Endothelial cell of umbilical vein (primary cell): ENCODE measurements at regions of chr7 and their contacts with region 1.

Region 1: GRCh38 chr7:108294595-108294994 is 161.6 kb downstream of the NRCAM start:
- DNase-seq: peak; percentile 81
- H3K4me3 ChIP-seq: no peak overlapping the region
- H3K27ac ChIP-seq: peak overlapping the region; percentile 88
- H3K4me1 ChIP-seq: peaks cover 70% of the 10 kb centered on the region
- H3K27me3 ChIP-seq: no peaks in the 10 kb centered on the region
- CTCF ChIP-seq: no peak
- POLR2A ChIP-seq: peak; percentile 54

Region 2: DNA sequence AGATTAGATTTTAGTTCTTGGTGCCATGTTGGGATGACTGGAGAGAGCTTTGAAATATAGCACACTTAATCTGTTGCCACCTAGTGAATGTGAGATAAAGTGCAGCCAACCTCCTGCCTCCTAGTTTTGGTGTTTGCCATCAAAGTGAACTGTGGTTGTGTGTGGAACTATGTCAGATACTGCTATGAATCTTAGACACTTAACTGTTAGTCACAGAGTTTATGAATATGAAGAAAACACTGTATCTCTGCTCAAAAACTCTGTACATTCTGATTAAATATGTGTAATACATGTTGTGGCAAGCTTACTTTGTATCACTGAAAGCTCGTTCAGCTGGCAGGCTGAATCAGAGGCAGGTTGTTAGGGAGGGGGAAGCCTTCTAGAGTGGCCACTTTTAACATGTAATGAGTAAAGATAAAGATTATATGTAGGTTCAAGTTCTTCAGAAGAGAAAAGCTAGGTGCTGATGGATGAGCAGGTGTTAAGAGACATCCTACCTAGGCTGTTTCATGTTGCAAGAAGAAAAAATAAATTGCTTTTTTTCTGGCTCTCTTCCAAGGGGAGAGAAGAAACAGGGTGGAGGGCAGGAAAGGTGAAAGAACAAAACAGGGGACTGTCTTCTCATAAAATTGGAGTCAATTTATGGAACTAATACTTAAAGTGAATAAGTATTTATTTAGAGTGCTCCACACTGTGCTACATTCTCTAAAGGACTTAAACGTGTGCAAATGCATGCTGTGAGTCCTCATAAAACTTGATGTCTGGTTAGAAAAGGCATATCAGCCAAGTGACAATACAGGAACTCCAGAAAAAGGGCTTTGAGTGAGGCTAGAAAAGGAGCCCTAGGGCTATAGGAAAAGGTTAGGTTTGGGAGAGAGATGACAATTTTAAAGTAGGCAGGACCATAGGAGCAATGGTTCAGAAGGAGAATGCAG is 277.5 kb before region 1 on chr7:
- CTCF ChIA-PET with region 1: no interaction called
- POLR2A ChIA-PET with region 1: no interaction called
- dilution Hi-C with region 1: no loop called
- intact Hi-C with region 1: loop called (anchors 10 kb)
- DNase-seq: peak; percentile 87
- H3K4me3 ChIP-seq: no peak overlapping the region
- H3K27ac ChIP-seq: peak overlapping the region; percentile 96
- H3K4me1 ChIP-seq: peaks cover 67% of the 10 kb centered on the region
- H3K27me3 ChIP-seq: no peaks in the 10 kb centered on the region
- CTCF ChIP-seq: peak; percentile 52
- POLR2A ChIP-seq: no peak

Region 3: GRCh38 chr7:108211382-108212201 is 83.0 kb before region 1 on chr7:
- CTCF ChIA-PET with region 1: no interaction called
- POLR2A ChIA-PET with region 1: no interaction called
- dilution Hi-C with region 1: no loop called
- intact Hi-C with region 1: no loop called
- DNase-seq: peak; percentile 73
- H3K4me3 ChIP-seq: no peak overlapping the region
- H3K27ac ChIP-seq: peak overlapping the region; percentile 76
- H3K4me1 ChIP-seq: peaks cover 14% of the 10 kb centered on the region
- H3K27me3 ChIP-seq: no peaks in the 10 kb centered on the region
- CTCF ChIP-seq: no peak
- POLR2A ChIP-seq: no peak

Region 4: DNA sequence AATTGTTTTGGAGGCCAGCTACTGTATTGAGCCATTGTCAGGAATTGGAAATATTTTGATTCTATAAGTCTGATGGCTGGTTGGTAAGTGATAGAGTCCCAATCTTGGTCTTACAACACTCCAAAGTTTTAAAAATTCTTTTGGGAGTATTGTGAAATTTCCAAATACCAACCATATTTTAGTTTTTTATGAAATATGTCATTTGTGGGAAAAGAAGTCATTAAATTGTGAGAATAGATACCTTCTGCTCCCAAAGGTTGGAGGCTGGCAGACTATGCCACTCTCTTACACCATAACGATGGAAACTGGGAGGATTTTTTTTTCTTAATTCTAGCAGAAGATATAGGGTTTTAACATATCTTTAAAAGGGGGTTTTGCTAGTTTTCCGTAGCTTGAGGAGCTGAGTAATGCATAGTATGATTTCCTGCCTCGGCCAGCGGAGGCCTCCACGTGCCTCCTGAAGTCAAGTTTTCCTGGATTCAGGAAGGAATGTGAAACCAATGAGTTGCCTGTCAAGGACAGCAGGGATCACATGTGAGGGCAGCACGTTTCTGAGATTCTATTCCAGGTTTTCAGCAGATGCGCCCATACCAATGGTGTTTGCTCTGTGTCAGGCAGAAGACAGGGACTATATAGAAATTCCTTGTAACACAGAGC is 72.2 kb before region 1 on chr7:
- CTCF ChIA-PET with region 1: interaction called, 5 read pairs
- POLR2A ChIA-PET with region 1: no interaction called
- dilution Hi-C with region 1: no loop called
- intact Hi-C with region 1: loop called (anchors 5 kb)
- DNase-seq: peak; percentile 83
- H3K4me3 ChIP-seq: no peak overlapping the region
- H3K27ac ChIP-seq: peak overlapping the region; percentile 57
- H3K4me1 ChIP-seq: peaks cover 13% of the 10 kb centered on the region
- H3K27me3 ChIP-seq: no peaks in the 10 kb centered on the region
- CTCF ChIP-seq: no peak
- POLR2A ChIP-seq: no peak

Region 5: DNA sequence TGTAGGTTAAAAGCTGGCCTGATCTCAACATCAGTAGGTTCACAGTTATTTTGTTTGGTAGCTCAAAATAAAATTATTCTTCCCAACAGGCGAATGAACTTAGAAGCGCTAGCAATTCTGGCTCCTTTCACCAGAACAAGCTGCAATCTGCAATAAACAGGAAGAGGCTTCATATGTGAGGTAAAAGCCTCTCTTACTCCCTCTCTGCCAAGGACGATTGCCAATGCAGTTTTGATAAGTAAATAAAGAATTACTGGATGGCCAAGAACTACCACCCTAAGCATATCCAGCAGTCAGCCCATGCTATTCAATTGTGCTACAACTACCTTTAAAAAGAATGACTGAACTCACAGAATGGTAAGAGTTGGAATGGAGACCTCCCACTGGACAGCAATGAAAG is 14.5 kb before region 1 on chr7:
- CTCF ChIA-PET with region 1: interaction called, 18 read pairs
- POLR2A ChIA-PET with region 1: no interaction called
- dilution Hi-C with region 1: no loop called
- intact Hi-C with region 1: loop called (anchors 1 kb)
- DNase-seq: peak; percentile 64
- H3K4me3 ChIP-seq: no peak overlapping the region
- H3K27ac ChIP-seq: peak overlapping the region; percentile 10
- H3K4me1 ChIP-seq: peaks cover 55% of the 10 kb centered on the region
- H3K27me3 ChIP-seq: no peaks in the 10 kb centered on the region
- CTCF ChIP-seq: no peak
- POLR2A ChIP-seq: no peak

Region 6: GRCh38 chr7:108372618-108373017 is 78.0 kb after region 1 on chr7:
- CTCF ChIA-PET with region 1: no interaction called
- POLR2A ChIA-PET with region 1: no interaction called
- dilution Hi-C with region 1: no loop called
- intact Hi-C with region 1: loop called (anchors 2 kb)
- DNase-seq: no peak
- H3K4me3 ChIP-seq: no peak overlapping the region
- H3K27ac ChIP-seq: no peak overlapping the region
- H3K4me1 ChIP-seq: peaks cover 6% of the 10 kb centered on the region
- H3K27me3 ChIP-seq: no peaks in the 10 kb centered on the region
- CTCF ChIP-seq: no peak
- POLR2A ChIP-seq: no peak

Region 7: GRCh38 chr7:108452722-108453121 is 158.1 kb after region 1 on chr7:
- CTCF ChIA-PET with region 1: interaction called, 4 read pairs
- POLR2A ChIA-PET with region 1: no interaction called
- dilution Hi-C with region 1: no loop called
- intact Hi-C with region 1: loop called (anchors 1 kb)
- DNase-seq: peak; percentile 69
- H3K4me3 ChIP-seq: no peak overlapping the region
- H3K27ac ChIP-seq: peak overlapping the region; percentile 59
- H3K4me1 ChIP-seq: peaks cover 49% of the 10 kb centered on the region
- H3K27me3 ChIP-seq: no peaks in the 10 kb centered on the region
- CTCF ChIP-seq: peak; percentile 49 to 69
- POLR2A ChIP-seq: no peak

Region 8: GRCh38 chr7:108497082-108497725 is 202.6 kb after region 1 on chr7:
- CTCF ChIA-PET with region 1: interaction called, 10 read pairs
- POLR2A ChIA-PET with region 1: no interaction called
- dilution Hi-C with region 1: no loop called
- intact Hi-C with region 1: no loop called
- DNase-seq: peak; percentile 73
- H3K4me3 ChIP-seq: no peak overlapping the region
- H3K27ac ChIP-seq: no peak overlapping the region
- H3K4me1 ChIP-seq: peaks cover 8% of the 10 kb centered on the region
- H3K27me3 ChIP-seq: no peaks in the 10 kb centered on the region
- CTCF ChIP-seq: peak; percentile 43 to 61
- POLR2A ChIP-seq: no peak

Region 9: GRCh38 chr7:108515013-108515412 is 220.4 kb after region 1 on chr7:
- CTCF ChIA-PET with region 1: no interaction called
- POLR2A ChIA-PET with region 1: no interaction called
- dilution Hi-C with region 1: no loop called
- intact Hi-C with region 1: no loop called
- DNase-seq: no peak
- H3K4me3 ChIP-seq: no peak overlapping the region
- H3K27ac ChIP-seq: no peak overlapping the region
- H3K4me1 ChIP-seq: peaks cover 10% of the 10 kb centered on the region
- H3K27me3 ChIP-seq: no peaks in the 10 kb centered on the region
- CTCF ChIP-seq: no peak
- POLR2A ChIP-seq: no peak

Region 10: GRCh38 chr7:108569381-108570145 is 275.0 kb after region 1 on chr7 and contains the starts of genes DNAJB9 and THAP5:
- CTCF ChIA-PET with region 1: no interaction called
- POLR2A ChIA-PET with region 1: no interaction called
- dilution Hi-C with region 1: no loop called
- intact Hi-C with region 1: no loop called
- DNase-seq: peak; percentile 100
- H3K4me3 ChIP-seq: peak within 1 kb of the TSS; percentile 63 to 99 (median 79)
- H3K27ac ChIP-seq: peak within 1 kb of the TSS; percentile 90
- H3K4me1 ChIP-seq: peaks cover 37% of the 10 kb centered on the region
- H3K27me3 ChIP-seq: no peaks in the 10 kb centered on the region
- CTCF ChIP-seq: peak in 1 of 2 donors; percentile 3
- POLR2A ChIP-seq: peak; percentile 75
- total RNA-seq, gene DNAJB9: 11.9 and 13.4 TPM in 2 replicates
- total RNA-seq, gene THAP5: 14.1 and 17.0 TPM in 2 replicates

Region 11: GRCh38 chr7:108985037-108985436 is 690.4 kb after region 1 on chr7:
- CTCF ChIA-PET with region 1: no interaction called
- POLR2A ChIA-PET with region 1: no interaction called
- dilution Hi-C with region 1: no loop called
- intact Hi-C with region 1: no loop called
- DNase-seq: no peak
- H3K4me3 ChIP-seq: no peak overlapping the region
- H3K27ac ChIP-seq: no peak overlapping the region
- H3K4me1 ChIP-seq: no peaks in the 10 kb centered on the region
- H3K27me3 ChIP-seq: no peaks in the 10 kb centered on the region
- CTCF ChIP-seq: no peak
- POLR2A ChIP-seq: no peak